GM10248 (cell line): ENCODE measurements at regions of chr20 and their contacts with region 1.

Region 1: DNA sequence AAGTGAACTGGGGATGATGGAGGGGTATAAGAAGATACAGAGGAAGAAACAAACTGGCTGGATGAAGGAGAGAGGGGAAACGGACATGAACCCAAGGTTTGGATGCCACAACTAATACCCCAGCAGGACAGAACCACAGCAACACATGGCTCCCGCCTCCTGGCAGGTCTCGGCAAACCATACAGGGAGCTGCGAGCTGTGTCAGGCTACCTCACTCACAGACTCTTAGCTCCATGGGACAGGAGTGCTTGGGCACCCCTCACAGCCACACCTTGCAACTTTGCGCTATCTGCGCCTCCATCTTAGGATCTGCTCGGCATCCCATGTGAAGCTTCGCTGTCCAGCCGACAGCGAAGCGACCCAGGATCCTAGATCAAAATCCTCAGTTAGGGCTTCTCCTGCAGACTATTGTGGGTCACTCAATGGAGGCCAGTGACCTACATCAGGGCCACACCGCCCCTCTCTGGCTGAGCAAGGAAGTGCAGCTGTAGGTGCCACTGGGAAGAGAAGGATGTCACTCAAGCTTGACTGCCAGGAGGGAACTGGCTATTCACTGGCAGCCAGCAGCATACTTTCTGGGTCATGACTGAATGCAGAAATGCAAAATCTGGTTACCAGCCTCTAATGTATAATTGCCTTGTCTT is 174.4 kb upstream of the RIN2 start:
- DNase-seq: peak; percentile 71
- CTCF ChIP-seq: peak; percentile 88

Region 2: DNA sequence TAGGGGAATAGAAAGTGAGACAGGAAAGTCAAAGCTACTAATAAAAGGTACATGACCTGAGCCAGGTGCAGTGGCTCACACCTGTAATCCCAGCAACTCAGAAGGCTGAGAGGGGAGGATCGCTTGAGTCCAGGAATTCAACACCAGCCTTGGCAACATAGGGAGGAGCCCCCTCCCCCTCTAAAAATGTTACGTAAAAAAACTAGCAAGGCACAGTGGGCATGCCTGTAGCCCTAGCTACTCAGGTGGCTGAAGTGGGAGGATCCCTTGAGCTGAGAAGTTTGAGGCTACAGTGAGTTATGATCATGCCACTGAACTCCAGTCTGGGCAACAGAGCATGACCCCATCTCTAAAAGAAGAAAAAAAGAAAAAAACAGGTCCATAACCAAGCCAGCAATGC is 11.7 kb before region 1 on chr20:
- CTCF ChIA-PET with region 1: interaction called, 35 read pairs
- POLR2A ChIA-PET with region 1: no interaction called
- DNase-seq: no peak
- CTCF ChIP-seq: no peak

Region 3: GRCh38 chr20:19594896-19595295 is 11.2 kb after region 1 on chr20:
- CTCF ChIA-PET with region 1: interaction called, 12 read pairs
- POLR2A ChIA-PET with region 1: no interaction called
- DNase-seq: no peak
- CTCF ChIP-seq: no peak

Region 4: GRCh38 chr20:19971116-19971515 is 387.5 kb after region 1 on chr20:
- CTCF ChIA-PET with region 1: no interaction called
- POLR2A ChIA-PET with region 1: no interaction called
- DNase-seq: no peak
- CTCF ChIP-seq: no peak